Left ventricle myocardium superior (tissue), 1 donor: ENCODE measurements at regions of chr9 and their contacts with region 1.

Region 1: DNA sequence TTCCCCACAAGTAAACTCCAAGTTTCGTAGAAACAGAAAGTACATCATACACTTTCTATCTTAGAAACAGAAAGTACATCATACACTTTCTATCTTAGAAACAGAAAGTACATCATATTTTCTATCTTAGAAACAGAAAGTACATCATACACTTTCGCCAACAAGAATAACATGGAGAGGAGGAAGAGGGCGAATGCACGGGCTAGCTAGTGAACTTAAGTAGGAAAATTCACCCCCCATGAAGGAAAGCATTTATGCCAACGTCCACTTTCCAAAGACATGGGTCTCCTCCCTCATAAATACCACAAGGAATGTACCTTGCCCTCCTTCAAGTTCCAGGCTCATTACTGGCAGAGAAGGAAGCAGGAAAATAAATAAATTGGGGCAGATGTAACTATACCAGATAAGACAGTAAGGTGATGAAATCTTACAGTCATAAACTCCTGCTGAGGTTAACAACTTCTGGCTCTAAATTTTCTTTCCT is 64.7 kb downstream of the FRMD3 start:
- DNase-seq: no peak
- ATAC-seq: no peak

Region 2: DNA sequence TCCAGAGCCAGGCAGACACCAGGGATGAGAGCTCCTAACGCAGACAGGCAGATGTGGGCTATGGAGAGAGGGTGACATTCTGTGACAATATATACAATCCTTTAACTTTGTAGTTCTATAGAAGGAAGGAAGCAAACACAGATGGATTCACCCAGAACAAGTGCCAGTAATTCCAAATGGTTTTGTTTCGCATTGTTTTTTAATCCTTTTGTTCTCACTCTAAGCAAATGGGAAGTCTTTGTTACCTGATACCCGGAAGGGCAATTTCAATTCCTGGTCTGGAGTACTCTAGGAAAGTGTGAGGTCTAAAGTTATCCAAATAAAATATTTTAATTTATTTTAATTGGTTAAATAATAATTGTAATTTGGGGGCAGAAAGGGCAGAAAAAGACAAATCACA is 62.2 kb after region 1 on chr9:
- intact Hi-C with region 1: loop called (anchors 2 kb)
- DNase-seq: no peak
- ATAC-seq: no peak